ENCODE measurements at regions of chr1 and their contacts with region 1.

Region 1: GRCh38 chr1:162303002-162303344 is 73.7 kb downstream of the SPATA46 start:
- DNase-seq: peak; percentile 91
- ATAC-seq: peak; percentile 86
- H3K4me3 ChIP-seq: no peak overlapping the region
- H3K27ac ChIP-seq: peak overlapping the region; percentile 50
- H3K4me1 ChIP-seq: peaks cover 33% of the 10 kb centered on the region
- H3K27me3 ChIP-seq: no peaks in the 10 kb centered on the region
- CTCF ChIP-seq: no peak

Region 2: DNA sequence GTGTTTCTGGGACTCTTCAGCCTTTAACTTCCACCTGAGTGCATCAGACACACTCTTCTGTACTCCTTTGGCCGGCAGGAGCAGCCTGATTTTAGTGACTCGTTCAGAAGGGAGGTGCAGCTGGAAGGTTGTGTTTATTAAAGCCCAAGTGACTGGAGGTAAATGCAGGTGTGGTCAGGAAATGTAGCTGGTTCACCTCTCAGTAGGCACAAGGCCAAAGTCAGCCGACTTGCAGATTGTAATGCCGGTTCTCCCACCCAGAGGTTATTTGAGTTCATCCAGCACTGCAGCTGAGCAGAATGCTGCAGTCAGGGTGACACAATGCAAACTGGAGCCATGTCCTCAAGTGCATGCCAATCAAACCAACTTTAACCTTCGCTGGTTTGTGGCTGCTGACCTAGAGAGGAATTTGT is 17.8 kb before region 1 on chr1:
- CTCF ChIA-PET with region 1: no interaction called
- POLR2A ChIA-PET with region 1: no interaction called
- intact Hi-C with region 1: no loop called
- DNase-seq: peak; percentile 96
- ATAC-seq: peak; percentile 94
- H3K4me3 ChIP-seq: 0 out of 2 replicates have a peak overlapping the region, but pooled peaks have one; percentile 20
- H3K27ac ChIP-seq: 0 out of 2 replicates have a peak overlapping the region, but pooled peaks have one; percentile 3
- H3K4me1 ChIP-seq: peaks cover 20% of the 10 kb centered on the region
- H3K27me3 ChIP-seq: no peaks in the 10 kb centered on the region
- CTCF ChIP-seq: no peak; the same call in 1 of the 2 replicates

Region 3: DNA sequence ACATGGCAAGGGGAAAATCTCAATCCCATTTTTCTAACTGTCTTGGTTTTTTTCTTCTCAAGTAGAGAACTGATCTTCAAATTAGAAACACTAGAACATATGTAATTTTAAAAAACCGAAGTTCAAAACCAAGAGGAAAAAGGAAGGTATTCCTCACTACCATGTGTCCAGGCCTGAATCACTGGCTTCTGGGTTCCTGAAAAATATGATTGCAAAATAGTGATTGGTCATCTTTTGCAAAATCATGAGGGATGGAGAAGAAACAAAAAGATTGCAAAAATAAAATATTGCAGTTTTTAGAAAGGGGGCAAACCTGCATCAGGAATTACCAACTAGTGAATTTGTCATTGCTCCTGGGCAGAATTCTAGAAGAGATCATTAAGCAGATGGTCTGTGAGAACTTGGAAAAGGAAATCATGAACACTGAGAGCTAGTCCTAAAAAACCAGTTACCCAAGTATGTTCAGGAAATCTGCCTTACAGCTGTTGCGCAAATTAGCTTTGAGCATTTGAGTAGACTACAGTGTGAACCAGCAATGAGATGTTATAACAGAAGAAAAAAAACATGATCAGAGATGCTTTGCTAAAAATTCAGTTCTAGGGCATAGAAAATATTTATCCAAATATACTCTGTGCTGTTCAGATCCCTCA is 24.3 kb after region 1 on chr1:
- CTCF ChIA-PET with region 1: no interaction called
- POLR2A ChIA-PET with region 1: no interaction called
- intact Hi-C with region 1: no loop called
- DNase-seq: no peak
- ATAC-seq: no peak
- H3K4me3 ChIP-seq: no peak overlapping the region
- H3K27ac ChIP-seq: no peak overlapping the region
- H3K4me1 ChIP-seq: no peaks in the 10 kb centered on the region
- H3K27me3 ChIP-seq: no peaks in the 10 kb centered on the region
- CTCF ChIP-seq: no peak

Region 4: GRCh38 chr1:162349635-162350330 is 46.8 kb after region 1 on chr1:
- CTCF ChIA-PET with region 1: no interaction called
- POLR2A ChIA-PET with region 1: no interaction called
- intact Hi-C with region 1: loop called (anchors 2 kb)
- DNase-seq: peak; percentile 80
- ATAC-seq: peak; percentile 93
- H3K4me3 ChIP-seq: peak overlapping the region; percentile 8; the same call in 1 of the 2 replicates
- H3K27ac ChIP-seq: peak overlapping the region; percentile 69
- H3K4me1 ChIP-seq: peaks cover 21% of the 10 kb centered on the region
- H3K27me3 ChIP-seq: no peaks in the 10 kb centered on the region
- CTCF ChIP-seq: no peak

Measured in PC-3 (cell line).